ENCODE measurements at regions of chr7 and their contacts with region 1.

Region 1: DNA sequence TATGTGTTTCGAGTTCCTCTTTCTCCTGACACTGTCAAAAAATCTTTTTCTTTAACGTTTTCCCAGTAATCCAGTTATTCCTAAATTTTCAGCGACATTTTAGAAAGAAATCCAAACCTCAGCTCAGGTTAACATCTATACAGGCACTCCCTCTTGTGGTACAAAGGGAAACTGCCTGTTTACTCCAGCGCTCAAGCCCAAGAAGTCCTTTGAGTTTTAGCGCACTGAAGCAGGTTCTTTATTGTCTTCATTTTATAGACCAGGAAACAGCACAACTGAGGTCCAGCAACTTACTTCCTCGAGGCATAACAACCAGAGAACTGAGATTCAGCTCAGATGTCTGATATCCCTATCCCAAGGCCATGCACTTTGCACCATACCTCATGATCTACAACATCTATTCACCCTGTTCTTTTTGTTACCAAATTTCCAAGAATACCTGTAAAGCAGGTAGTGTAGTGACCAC is 287.2 kb upstream of the MKLN1 start:
- DNase-seq: peak; percentile 63
- ATAC-seq: peak; percentile 68
- H3K4me3 Mint-ChIP-seq: peak overlapping the region; percentile 40
- H3K27ac Mint-ChIP-seq: peak overlapping the region; percentile 82
- H3K4me1 Mint-ChIP-seq: peaks cover 59% of the 10 kb centered on the region
- H3K27me3 Mint-ChIP-seq: no peaks in the 10 kb centered on the region

Region 2: GRCh38 chr7:130896898-130897514 is 143.5 kb before region 1 on chr7:
- CTCF ChIA-PET with region 1: interaction called, 30 read pairs
- POLR2A ChIA-PET with region 1: interaction called, 3 read pairs
- intact Hi-C with region 1: loop called (anchors 1 to 2 kb)
- DNase-seq: peak; percentile 87
- ATAC-seq: peak; percentile 56
- H3K4me3 Mint-ChIP-seq: peak overlapping the region; percentile 22
- H3K27ac Mint-ChIP-seq: peak overlapping the region; percentile 88
- H3K4me1 Mint-ChIP-seq: peaks cover 94% of the 10 kb centered on the region
- H3K27me3 Mint-ChIP-seq: no peaks in the 10 kb centered on the region

Region 3: GRCh38 chr7:130941322-130942210 is 98.9 kb before region 1 on chr7:
- CTCF ChIA-PET with region 1: interaction called, 40 read pairs
- POLR2A ChIA-PET with region 1: interaction called, 3 read pairs
- intact Hi-C with region 1: no loop called
- DNase-seq: peak; percentile 54
- ATAC-seq: peak; percentile 7
- H3K4me3 Mint-ChIP-seq: peak overlapping the region; percentile 67
- H3K27ac Mint-ChIP-seq: peak overlapping the region; percentile 88
- H3K4me1 Mint-ChIP-seq: peaks cover 90% of the 10 kb centered on the region
- H3K27me3 Mint-ChIP-seq: no peaks in the 10 kb centered on the region

Region 4: GRCh38 chr7:130982160-130982638 is 58.3 kb before region 1 on chr7:
- CTCF ChIA-PET with region 1: interaction called, 96 read pairs
- POLR2A ChIA-PET with region 1: interaction called, 3 read pairs
- intact Hi-C with region 1: loop called (anchors 1 kb)
- DNase-seq: peak; percentile 39
- ATAC-seq: peak; percentile 81
- H3K4me3 Mint-ChIP-seq: no peak overlapping the region
- H3K27ac Mint-ChIP-seq: no peak overlapping the region
- H3K4me1 Mint-ChIP-seq: peaks cover 54% of the 10 kb centered on the region
- H3K27me3 Mint-ChIP-seq: no peaks in the 10 kb centered on the region

Region 5: GRCh38 chr7:131002600-131002999 is 37.9 kb before region 1 on chr7:
- CTCF ChIA-PET with region 1: interaction called, 11 read pairs
- POLR2A ChIA-PET with region 1: no interaction called
- intact Hi-C with region 1: loop called in 1 of 2 experiments (anchors 2 kb)
- DNase-seq: no peak
- ATAC-seq: no peak
- H3K4me3 Mint-ChIP-seq: no peak overlapping the region
- H3K27ac Mint-ChIP-seq: no peak overlapping the region
- H3K4me1 Mint-ChIP-seq: peaks cover 75% of the 10 kb centered on the region
- H3K27me3 Mint-ChIP-seq: no peaks in the 10 kb centered on the region

Region 6: GRCh38 chr7:131015655-131015954 is 24.9 kb before region 1 on chr7:
- CTCF ChIA-PET with region 1: interaction called, 17 read pairs
- POLR2A ChIA-PET with region 1: no interaction called
- intact Hi-C with region 1: no loop called
- DNase-seq: no peak
- ATAC-seq: no peak
- H3K4me3 Mint-ChIP-seq: no peak overlapping the region
- H3K27ac Mint-ChIP-seq: peak overlapping the region; percentile 53
- H3K4me1 Mint-ChIP-seq: peaks cover 89% of the 10 kb centered on the region
- H3K27me3 Mint-ChIP-seq: no peaks in the 10 kb centered on the region

Region 7: GRCh38 chr7:131057015-131057793 is 16.7 kb after region 1 on chr7:
- CTCF ChIA-PET with region 1: interaction called, 24 read pairs
- POLR2A ChIA-PET with region 1: no interaction called
- intact Hi-C with region 1: no loop called
- DNase-seq: no peak
- ATAC-seq: peak; percentile 57
- H3K4me3 Mint-ChIP-seq: peak overlapping the region; percentile 31
- H3K27ac Mint-ChIP-seq: peak overlapping the region; percentile 76
- H3K4me1 Mint-ChIP-seq: peaks cover 64% of the 10 kb centered on the region
- H3K27me3 Mint-ChIP-seq: no peaks in the 10 kb centered on the region

Region 8: GRCh38 chr7:131312838-131313237 is 272.3 kb after region 1 on chr7:
- CTCF ChIA-PET with region 1: no interaction called
- POLR2A ChIA-PET with region 1: no interaction called
- intact Hi-C with region 1: no loop called
- DNase-seq: no peak
- ATAC-seq: no peak
- H3K4me3 Mint-ChIP-seq: no peak overlapping the region
- H3K27ac Mint-ChIP-seq: no peak overlapping the region
- H3K4me1 Mint-ChIP-seq: no peaks in the 10 kb centered on the region
- H3K27me3 Mint-ChIP-seq: no peaks in the 10 kb centered on the region

Measured in activated CD4-positive, alpha-beta T cell treated with anti-CD3 and anti-CD28 coated beads for 36 hours (primary cell).